Panc1 (cell line): ENCODE measurements at regions of chr2 and their contacts with region 1.

Region 1: DNA sequence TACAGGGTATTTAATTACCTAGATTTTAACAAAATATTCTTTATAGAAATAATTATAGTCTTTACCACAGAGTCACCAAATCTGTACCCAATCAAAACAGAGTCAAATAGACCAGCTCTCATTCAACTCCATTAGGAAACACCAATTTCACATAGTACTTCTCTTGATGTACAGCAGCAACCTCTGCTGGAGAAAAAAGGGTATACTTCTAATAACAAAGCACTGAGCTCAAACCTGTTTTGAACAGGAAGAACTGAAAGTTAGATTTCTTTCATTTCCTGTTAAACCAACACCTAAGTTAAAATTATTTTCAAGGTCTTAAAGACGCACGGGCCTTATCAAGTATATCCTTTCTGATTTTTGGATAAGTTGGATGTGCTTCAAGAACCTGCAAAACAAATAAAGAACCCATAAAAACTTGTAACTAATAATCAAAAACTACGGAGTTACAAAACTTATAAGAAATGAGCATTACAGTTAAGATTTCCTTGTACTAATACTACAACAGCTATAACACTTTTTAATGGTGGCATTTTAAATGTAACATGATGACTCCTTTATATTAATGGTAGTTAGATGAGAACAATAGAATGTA is 79.0 kb downstream of the TTC21B start:
- DNase-seq: no peak
- ATAC-seq: peak; percentile 66; the same call in 1 of the 2 replicates
- H3K4me3 ChIP-seq: no peak overlapping the region
- H3K27ac ChIP-seq: no peak overlapping the region
- H3K4me1 ChIP-seq: no peaks in the 10 kb centered on the region
- H3K27me3 ChIP-seq: no peaks in the 10 kb centered on the region
- CTCF ChIP-seq: peak; percentile 61; the same call in 1 of the 2 replicates

Region 2: GRCh38 chr2:165239230-165239629 is 635.3 kb before region 1 on chr2 and contains the start of gene SCN2A:
- CTCF ChIA-PET with region 1: no interaction called
- POLR2A ChIA-PET with region 1: no interaction called
- in situ Hi-C with region 1: no loop called
- intact Hi-C with region 1: loop called (anchors 10 kb)
- DNase-seq: peak; percentile 35
- ATAC-seq: no peak
- H3K4me3 ChIP-seq: no peak within 1 kb of the TSS
- H3K27ac ChIP-seq: no peak within 1 kb of the TSS
- H3K4me1 ChIP-seq: no peaks in the 10 kb centered on the region
- H3K27me3 ChIP-seq: no peaks in the 10 kb centered on the region
- CTCF ChIP-seq: peak; percentile 72; the same call in 1 of the 2 replicates
- total RNA-seq, gene SCN2A: not detected

Region 3: GRCh38 chr2:165803123-165803760 is 71.3 kb before region 1 on chr2:
- CTCF ChIA-PET with region 1: interaction called, 12 read pairs
- POLR2A ChIA-PET with region 1: no interaction called
- in situ Hi-C with region 1: no loop called
- intact Hi-C with region 1: no loop called
- DNase-seq: no peak
- ATAC-seq: no peak
- H3K4me3 ChIP-seq: no peak overlapping the region
- H3K27ac ChIP-seq: no peak overlapping the region
- H3K4me1 ChIP-seq: no peaks in the 10 kb centered on the region
- H3K27me3 ChIP-seq: no peaks in the 10 kb centered on the region
- CTCF ChIP-seq: no peak

Region 4: DNA sequence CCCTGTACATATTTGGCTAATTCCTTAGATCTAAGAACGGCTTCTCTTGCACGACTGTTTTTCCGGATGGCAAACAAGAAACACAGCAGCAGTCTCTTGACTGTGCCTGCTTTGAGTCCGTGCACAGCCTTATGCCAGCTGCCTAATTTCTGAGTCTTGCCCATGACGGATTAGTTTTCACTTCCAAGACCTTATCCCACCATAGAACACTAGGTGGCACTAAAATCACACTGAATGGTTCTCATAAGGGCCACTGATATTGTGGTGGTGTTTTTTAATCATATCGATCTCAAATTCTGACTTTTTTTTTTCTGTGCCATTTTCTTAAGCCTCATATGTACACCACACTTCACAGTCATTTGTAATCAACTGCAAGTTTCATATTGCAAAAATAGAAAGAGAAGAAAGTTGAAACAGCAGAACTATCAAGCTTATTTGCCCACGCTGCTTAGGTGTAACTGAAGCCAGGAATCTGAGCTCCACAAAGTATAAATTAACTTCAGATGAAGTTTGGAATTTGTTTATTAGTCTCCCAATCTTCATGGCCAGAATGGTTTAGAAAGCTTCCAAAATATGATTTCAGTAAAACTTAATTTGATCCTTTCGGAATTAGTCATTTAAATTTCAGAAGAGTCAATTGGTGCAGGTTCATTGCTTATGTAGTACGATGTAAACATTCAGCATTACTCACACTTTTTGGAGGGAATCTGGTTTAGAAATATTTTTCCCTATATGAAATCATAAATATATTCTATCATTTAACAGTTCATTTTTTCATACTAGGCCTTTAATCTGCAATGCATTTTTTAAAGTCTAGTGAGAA is 665.0 kb after region 1 on chr2:
- CTCF ChIA-PET with region 1: no interaction called
- POLR2A ChIA-PET with region 1: no interaction called
- in situ Hi-C with region 1: no loop called
- intact Hi-C with region 1: no loop called
- DNase-seq: peak; percentile 35
- ATAC-seq: peak; percentile 87
- H3K4me3 ChIP-seq: no peak overlapping the region
- H3K27ac ChIP-seq: no peak overlapping the region
- H3K4me1 ChIP-seq: no peaks in the 10 kb centered on the region
- H3K27me3 ChIP-seq: no peaks in the 10 kb centered on the region
- CTCF ChIP-seq: peak; percentile 83